Activated CD4-positive, alpha-beta T cell treated with anti-CD3 and anti-CD28 coated beads, Interleukin-2, amount 10 ng/mL, durations not matched to agents 24 days and 14 days (primary cell): ENCODE measurements at regions of chr17 and their contacts with region 1.

Region 1: GRCh38 chr17:5065227-5065744 is 13.0 kb upstream of the ZFP3 start:
- DNase-seq: no peak
- H3K4me3 Mint-ChIP-seq: no peak overlapping the region
- H3K27ac Mint-ChIP-seq: no peak overlapping the region
- H3K4me1 Mint-ChIP-seq: peaks cover 2% of the 10 kb centered on the region
- H3K27me3 Mint-ChIP-seq: no peaks in the 10 kb centered on the region

Region 2: GRCh38 chr17:4540224-4540641 is 525.1 kb before region 1 on chr17:
- intact Hi-C with region 1: no loop called
- DNase-seq: no peak
- H3K4me3 Mint-ChIP-seq: no peak overlapping the region
- H3K27ac Mint-ChIP-seq: no peak overlapping the region
- H3K4me1 Mint-ChIP-seq: no peaks in the 10 kb centered on the region
- H3K27me3 Mint-ChIP-seq: no peaks in the 10 kb centered on the region

Region 3: GRCh38 chr17:4908301-4908700 is 157.0 kb before region 1 on chr17:
- intact Hi-C with region 1: loop called (anchors 2 kb)
- DNase-seq: peak; percentile 69
- H3K4me3 Mint-ChIP-seq: no peak overlapping the region
- H3K27ac Mint-ChIP-seq: no peak overlapping the region
- H3K4me1 Mint-ChIP-seq: peaks cover 10% of the 10 kb centered on the region
- H3K27me3 Mint-ChIP-seq: peaks cover 8% of the 10 kb centered on the region

Region 4: GRCh38 chr17:4980644-4981216 is 84.6 kb before region 1 on chr17:
- intact Hi-C with region 1: loop called (anchors 1 kb)
- DNase-seq: peak; percentile 89
- H3K4me3 Mint-ChIP-seq: no peak overlapping the region
- H3K27ac Mint-ChIP-seq: peak overlapping the region; percentile 72
- H3K4me1 Mint-ChIP-seq: peaks cover 24% of the 10 kb centered on the region
- H3K27me3 Mint-ChIP-seq: no peaks in the 10 kb centered on the region

Region 5: DNA sequence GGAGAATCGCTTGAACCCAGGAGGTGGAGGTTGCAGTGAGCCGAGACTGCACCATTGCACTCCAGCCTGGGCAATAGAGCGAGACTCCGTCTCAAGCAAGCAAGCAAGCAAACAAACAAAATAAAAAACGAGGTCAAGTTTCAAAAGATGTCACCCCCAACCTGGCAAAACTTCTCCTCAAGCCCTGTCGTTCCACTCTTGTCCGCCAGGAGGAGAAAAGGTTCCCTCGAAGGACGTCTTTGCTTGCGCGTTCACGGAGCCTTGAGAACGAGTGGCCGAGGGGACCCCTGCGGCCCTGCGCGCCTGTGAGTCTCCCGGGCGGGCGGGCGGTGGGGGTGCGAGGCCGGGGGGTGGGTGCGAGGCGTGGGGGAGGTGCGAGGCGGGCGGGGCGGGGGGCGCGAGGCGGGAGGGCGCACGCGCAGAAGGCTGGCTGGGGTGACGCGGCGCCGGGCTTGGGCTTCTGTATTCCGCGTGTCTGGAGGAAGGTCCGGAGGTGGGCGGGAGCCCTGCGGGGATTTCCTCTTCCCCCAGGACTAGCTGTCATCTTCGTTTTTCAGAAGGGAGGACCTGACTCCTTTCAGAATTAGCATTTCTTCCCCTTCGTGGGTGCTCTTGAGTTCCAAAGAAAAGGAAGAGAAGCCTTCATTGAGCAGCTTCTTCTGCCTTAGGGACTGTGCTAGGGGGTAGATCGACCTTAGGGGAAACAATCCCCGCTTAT is 33.8 kb before region 1 on chr17:
- intact Hi-C with region 1: loop called (anchors 1 kb)
- DNase-seq: peak; percentile 95
- H3K4me3 Mint-ChIP-seq: peak overlapping the region; percentile 81
- H3K27ac Mint-ChIP-seq: peak overlapping the region; percentile 92
- H3K4me1 Mint-ChIP-seq: peaks cover 22% of the 10 kb centered on the region
- H3K27me3 Mint-ChIP-seq: peaks cover 2% of the 10 kb centered on the region